ENCODE measurements at regions of chr3 and their contacts with region 1.

Region 1: GRCh38 chr3:194003125-194004057 is 132.6 kb upstream of the HES1 start:
- DNase-seq: peak; percentile 92 to 97 (median 96)
- ATAC-seq: peak; percentile 91
- H3K4me3 ChIP-seq: peak overlapping the region; percentile 31; the same call in 1 of the 2 replicates
- H3K27ac ChIP-seq: peak overlapping the region; percentile 81
- H3K4me1 ChIP-seq: peaks cover 31 to 52% of the 10 kb centered on the region in 2 experiments
- H3K27me3 ChIP-seq: no peaks in the 10 kb centered on the region
- CTCF ChIP-seq: no peak
- EP300 ChIP-seq: peak; percentile 91
- POLR2A ChIP-seq: peak; percentile 40; the same call in 1 of the 2 replicates
- RAD21 ChIP-seq: peak; percentile 44 to 45; a peak in 3 of 4 replicates

Region 2: GRCh38 chr3:193078996-193079753 is 924.2 kb before region 1 on chr3:
- CTCF ChIA-PET with region 1: no interaction called
- POLR2A ChIA-PET with region 1: no interaction called
- in situ Hi-C with region 1: no loop called
- intact Hi-C with region 1: no loop called
- DNase-seq: no peak
- ATAC-seq: no peak
- H3K4me3 ChIP-seq: no peak overlapping the region
- H3K27ac ChIP-seq: no peak overlapping the region
- H3K4me1 ChIP-seq: no peaks in the 10 kb centered on the region
- H3K27me3 ChIP-seq: no peaks in the 10 kb centered on the region
- CTCF ChIP-seq: no peak
- EP300 ChIP-seq: no peak
- POLR2A ChIP-seq: no peak
- RAD21 ChIP-seq: no peak

Region 3: GRCh38 chr3:193788189-193788991 is 215.0 kb before region 1 on chr3:
- CTCF ChIA-PET with region 1: no interaction called
- POLR2A ChIA-PET with region 1: no interaction called
- in situ Hi-C with region 1: no loop called
- intact Hi-C with region 1: loop called (anchors 2 kb)
- DNase-seq: peak; percentile 83 to 89 (median 85)
- ATAC-seq: peak; percentile 99
- H3K4me3 ChIP-seq: no peak overlapping the region
- H3K27ac ChIP-seq: no peak overlapping the region
- H3K4me1 ChIP-seq: peaks cover 10 to 13% of the 10 kb centered on the region in 2 experiments; a peak in 3 of 5 replicates
- H3K27me3 ChIP-seq: no peaks in the 10 kb centered on the region
- CTCF ChIP-seq: peak; percentile 86 to 95 (median 93)
- EP300 ChIP-seq: peak; percentile 59
- POLR2A ChIP-seq: no peak
- RAD21 ChIP-seq: peak; percentile 95 to 96

Region 4: GRCh38 chr3:193910886-193911738 is 92.3 kb before region 1 on chr3:
- CTCF ChIA-PET with region 1: no interaction called
- POLR2A ChIA-PET with region 1: interaction called, 3 read pairs
- in situ Hi-C with region 1: no loop called
- intact Hi-C with region 1: loop called (anchors 2 kb)
- DNase-seq: peak; percentile 48 to 93 (median 68)
- ATAC-seq: peak; percentile 88
- H3K4me3 ChIP-seq: peak overlapping the region; percentile 18; the same call in 1 of the 2 replicates
- H3K27ac ChIP-seq: peak overlapping the region; percentile 92
- H3K4me1 ChIP-seq: peaks cover 30 to 55% of the 10 kb centered on the region in 2 experiments
- H3K27me3 ChIP-seq: no peaks in the 10 kb centered on the region
- CTCF ChIP-seq: no peak; a peak in 1 of 6 replicates
- EP300 ChIP-seq: peak; percentile 97
- POLR2A ChIP-seq: no peak; the same call in 1 of the 2 replicates
- RAD21 ChIP-seq: peak; percentile 60 to 61; a peak in 3 of 4 replicates

Region 5: GRCh38 chr3:194070634-194071409 is 67.4 kb after region 1 on chr3:
- CTCF ChIA-PET with region 1: no interaction called
- POLR2A ChIA-PET with region 1: interaction called, 4 read pairs
- in situ Hi-C with region 1: no loop called
- intact Hi-C with region 1: loop called (anchors 10 kb)
- DNase-seq: peak; percentile 72 to 93 (median 87)
- ATAC-seq: peak; percentile 89
- H3K4me3 ChIP-seq: peak overlapping the region; percentile 48
- H3K27ac ChIP-seq: peak overlapping the region; percentile 79; the same call in 2 of the 3 replicates
- H3K4me1 ChIP-seq: peaks cover 21% of the 10 kb centered on the region in 2 experiments
- H3K27me3 ChIP-seq: no peaks in the 10 kb centered on the region
- CTCF ChIP-seq: no peak
- EP300 ChIP-seq: no peak
- POLR2A ChIP-seq: peak; percentile 61; the same call in 1 of the 2 replicates
- RAD21 ChIP-seq: peak in 1 of 2 experiments; percentile 13; a peak in 1 of 4 replicates

Region 6: DNA sequence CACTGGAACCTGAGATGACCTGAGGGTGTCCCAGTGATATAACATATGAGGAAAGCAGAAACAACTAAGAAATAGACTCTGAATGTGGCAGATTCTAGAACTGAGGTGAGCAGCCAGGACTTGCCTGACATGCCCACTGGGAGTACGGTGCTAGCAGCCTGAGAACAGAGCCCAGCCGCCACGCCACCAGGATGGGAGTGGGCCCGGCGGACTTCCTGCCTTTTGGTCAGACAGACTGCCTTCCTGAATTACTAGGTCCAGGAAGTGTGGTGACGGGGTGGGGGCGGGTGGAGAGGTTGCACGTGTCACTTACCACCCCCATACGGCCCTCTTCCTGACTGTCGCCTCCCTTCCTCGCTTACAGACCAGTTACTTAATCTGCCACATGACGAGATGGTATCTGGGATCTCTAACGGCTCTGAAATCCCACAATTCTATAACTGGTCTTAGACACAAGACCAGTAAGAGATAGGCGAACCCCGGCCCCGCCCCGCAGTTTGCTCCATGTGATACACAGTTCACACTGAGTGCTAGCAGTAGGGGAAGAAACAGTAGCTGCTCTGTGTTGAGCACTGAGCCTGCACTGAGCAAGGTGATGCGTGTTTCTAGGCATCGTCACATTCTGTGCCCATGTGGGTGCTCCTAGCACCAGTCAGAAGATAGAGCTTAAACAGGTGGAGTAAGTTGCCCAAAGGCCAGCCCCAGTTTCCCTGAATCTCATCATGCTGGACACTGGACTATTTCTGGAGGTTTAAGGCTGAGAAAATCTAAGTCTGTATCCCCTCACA is 252.1 kb after region 1 on chr3:
- CTCF ChIA-PET with region 1: no interaction called
- POLR2A ChIA-PET with region 1: no interaction called
- in situ Hi-C with region 1: no loop called
- intact Hi-C with region 1: loop called (anchors 5 kb)
- DNase-seq: peak; percentile 92 to 98 (median 94)
- ATAC-seq: peak; percentile 96
- H3K4me3 ChIP-seq: peak overlapping the region; percentile 26
- H3K27ac ChIP-seq: peak overlapping the region; percentile 98
- H3K4me1 ChIP-seq: peaks cover 42 to 48% of the 10 kb centered on the region in 2 experiments
- H3K27me3 ChIP-seq: no peaks in the 10 kb centered on the region; a peak in 1 of 5 replicates
- CTCF ChIP-seq: no peak
- EP300 ChIP-seq: peak; percentile 100
- POLR2A ChIP-seq: peak; percentile 88
- RAD21 ChIP-seq: peak in 1 of 2 experiments; percentile 34; a peak in 3 of 4 replicates